Dorsolateral prefrontal cortex (tissue), 120 donors: ENCODE measurements at regions of chr1 and their contacts with region 1.

Region 1: GRCh38 chr1:119549719-119550132 is 42.7 kb downstream of the HSD3B1 start:
- DNase-seq: peak in 8 of 10 donors; percentile 29 to 71 (median 56)
- H3K4me3 ChIP-seq: no peak overlapping the region
- H3K27ac ChIP-seq: peak overlapping the region in 8 of 59 donors; percentile 1 to 48 (median 23)
- H3K27me3 ChIP-seq: no peaks in the 10 kb centered on the region
- CTCF ChIP-seq: peak in 54 of 56 donors; percentile 40 to 74 (median 62)

Region 2: DNA sequence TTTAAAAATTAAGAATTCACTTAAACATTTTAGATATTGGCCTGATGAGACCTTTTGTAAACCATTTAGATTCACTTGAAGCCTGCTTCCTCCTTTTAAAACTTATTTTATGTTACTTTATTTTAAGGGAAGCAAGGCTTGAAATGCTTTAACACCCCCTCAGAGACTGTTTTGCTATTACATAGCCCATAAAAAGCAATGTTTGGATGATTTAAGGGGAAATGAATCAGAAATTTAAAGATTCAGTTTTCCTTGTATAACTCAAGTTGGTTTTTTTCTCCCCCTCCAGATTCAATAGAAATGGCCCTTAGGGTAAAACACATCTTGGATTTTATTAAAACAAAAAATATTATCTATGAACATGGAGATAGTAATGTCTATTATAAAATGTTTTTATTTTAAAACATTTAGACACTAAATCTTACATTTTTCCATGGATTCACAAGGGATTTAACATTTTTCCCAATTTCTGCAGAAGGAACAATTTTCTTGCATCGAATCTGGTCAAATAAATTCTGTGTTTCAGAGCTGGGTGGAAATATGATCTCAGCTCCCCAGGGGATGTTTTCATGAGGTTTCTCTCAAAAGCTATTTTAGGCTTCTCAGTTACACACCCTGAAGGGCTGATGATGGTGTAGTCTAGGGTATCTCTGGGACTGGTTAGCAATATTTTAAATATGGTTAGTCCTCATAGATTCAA is 340.0 kb before region 1 on chr1:
- intact Hi-C with region 1: no loop called
- DNase-seq: no peak
- H3K4me3 ChIP-seq: no peak overlapping the region
- H3K27ac ChIP-seq: no peak overlapping the region
- H3K27me3 ChIP-seq: no peaks in the 10 kb centered on the region
- CTCF ChIP-seq: no peak

Region 3: GRCh38 chr1:119603695-119604094 is 54.0 kb after region 1 on chr1:
- intact Hi-C with region 1: no loop called
- DNase-seq: no peak
- H3K4me3 ChIP-seq: no peak overlapping the region
- H3K27ac ChIP-seq: no peak overlapping the region
- H3K27me3 ChIP-seq: no peaks in the 10 kb centered on the region
- CTCF ChIP-seq: no peak

Region 4: GRCh38 chr1:119647734-119648619 is 98.3 kb after region 1 on chr1 and contains the start of gene ZNF697:
- intact Hi-C with region 1: loop called in 1 of 2 experiments (anchors 5 kb)
- DNase-seq: peak; percentile 96 to 99 (median 98)
- H3K4me3 ChIP-seq: peak within 1 kb of the TSS; percentile 57 to 98 (median 87)
- H3K27ac ChIP-seq: peak within 1 kb of the TSS; percentile 20 to 94 (median 80)
- H3K27me3 ChIP-seq: no peaks in the 10 kb centered on the region
- CTCF ChIP-seq: peak in 38 of 56 donors; percentile 8 to 61 (median 32)
- total RNA-seq, gene ZNF697: 5.5 to 31.1 (median 20.7) TPM

Region 5: GRCh38 chr1:119662034-119662437 is 112.3 kb after region 1 on chr1:
- intact Hi-C with region 1: loop called in 1 of 2 experiments (anchors 10 kb)
- DNase-seq: no peak
- H3K4me3 ChIP-seq: no peak overlapping the region
- H3K27ac ChIP-seq: no peak overlapping the region
- H3K27me3 ChIP-seq: peaks cover 0 to 3% (median 0%) of the 10 kb centered on the region in 45 donors
- CTCF ChIP-seq: no peak